ENCODE measurements at regions of chr6 and their contacts with region 1.

Region 1: DNA sequence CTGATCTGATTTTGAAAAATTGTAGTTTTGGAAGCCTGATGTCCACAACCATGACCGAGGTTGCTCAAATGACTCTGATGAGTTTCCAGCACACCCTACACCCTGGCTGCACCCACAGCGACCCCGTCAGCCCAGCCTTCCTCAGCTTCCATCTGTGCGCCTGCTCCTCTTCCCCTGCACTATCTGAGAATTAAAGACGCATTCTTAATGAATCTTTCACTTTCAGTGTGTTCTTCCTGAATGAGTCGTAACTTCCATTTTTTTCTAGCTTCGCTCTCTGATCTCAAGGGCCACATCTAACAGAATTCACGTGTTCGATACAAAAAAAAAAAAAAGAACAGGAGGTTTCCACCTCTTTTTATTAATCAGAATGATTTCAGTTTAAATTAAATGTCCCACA is 21.3 kb upstream of the RREB1 start:
- DNase-seq: peak in 2 of 3 donors; percentile 68 to 70
- H3K4me3 ChIP-seq: peak overlapping the region; percentile 50 to 97 (median 91)
- H3K4me3 Mint-ChIP-seq: peak overlapping the region; percentile 77 to 93
- H3K27ac ChIP-seq: peak overlapping the region; percentile 73 to 95
- H3K27ac Mint-ChIP-seq: peak overlapping the region; percentile 80 to 97 (median 94)
- H3K4me1 ChIP-seq: peaks cover 23 to 28% of the 10 kb centered on the region in 2 donors
- H3K4me1 Mint-ChIP-seq: peaks cover 31% of the 10 kb centered on the region
- H3K27me3 ChIP-seq: no peaks in the 10 kb centered on the region
- H3K27me3 Mint-ChIP-seq: no peaks in the 10 kb centered on the region
- CTCF ChIP-seq: peak; percentile 5

Region 2: GRCh38 chr6:6696867-6697531 is 389.5 kb before region 1 on chr6:
- intact Hi-C with region 1: loop called in 1 of 2 experiments (anchors 10 kb)
- DNase-seq: peak; percentile 66 to 84 (median 81)
- H3K4me3 ChIP-seq: no peak overlapping the region
- H3K4me3 Mint-ChIP-seq: no peak overlapping the region
- H3K27ac ChIP-seq: peak overlapping the region; percentile 1 to 81
- H3K27ac Mint-ChIP-seq: peak overlapping the region; percentile 33 to 91 (median 78)
- H3K4me1 ChIP-seq: peaks cover 74 to 85% of the 10 kb centered on the region in 2 donors
- H3K4me1 Mint-ChIP-seq: peaks cover 78% of the 10 kb centered on the region
- H3K27me3 ChIP-seq: no peaks in the 10 kb centered on the region
- H3K27me3 Mint-ChIP-seq: no peaks in the 10 kb centered on the region
- CTCF ChIP-seq: peak; percentile 80

Region 3: GRCh38 chr6:6788394-6789020 is 298.0 kb before region 1 on chr6:
- intact Hi-C with region 1: no loop called
- DNase-seq: peak; percentile 40 to 65 (median 56)
- H3K4me3 ChIP-seq: no peak overlapping the region
- H3K4me3 Mint-ChIP-seq: no peak overlapping the region
- H3K27ac ChIP-seq: no peak overlapping the region
- H3K27ac Mint-ChIP-seq: peak overlapping the region in 1 of 7 donors; percentile 36
- H3K4me1 ChIP-seq: peaks cover 10 to 14% of the 10 kb centered on the region in 2 donors
- H3K4me1 Mint-ChIP-seq: peaks cover 34% of the 10 kb centered on the region
- H3K27me3 ChIP-seq: no peaks in the 10 kb centered on the region
- H3K27me3 Mint-ChIP-seq: peaks cover 0 to 3% (median 0%) of the 10 kb centered on the region in 3 donors
- CTCF ChIP-seq: peak; percentile 92

Region 4: GRCh38 chr6:6803572-6803971 is 282.9 kb before region 1 on chr6:
- intact Hi-C with region 1: no loop called
- DNase-seq: peak in 2 of 3 donors; percentile 62 to 70
- H3K4me3 ChIP-seq: no peak overlapping the region
- H3K4me3 Mint-ChIP-seq: no peak overlapping the region
- H3K27ac ChIP-seq: peak overlapping the region in 1 of 2 donors; percentile 11
- H3K27ac Mint-ChIP-seq: peak overlapping the region in 5 of 7 donors; percentile 53 to 89 (median 75)
- H3K4me1 ChIP-seq: peaks cover 96 to 99% of the 10 kb centered on the region in 2 donors
- H3K4me1 Mint-ChIP-seq: peaks cover 98% of the 10 kb centered on the region
- H3K27me3 ChIP-seq: no peaks in the 10 kb centered on the region
- H3K27me3 Mint-ChIP-seq: peaks cover 0 to 3% (median 1%) of the 10 kb centered on the region in 3 donors
- CTCF ChIP-seq: no peak

Measured in CD14-positive monocyte (primary cell).